ENCODE measurements at regions of chr18 and their contacts with region 1.

Region 1: DNA sequence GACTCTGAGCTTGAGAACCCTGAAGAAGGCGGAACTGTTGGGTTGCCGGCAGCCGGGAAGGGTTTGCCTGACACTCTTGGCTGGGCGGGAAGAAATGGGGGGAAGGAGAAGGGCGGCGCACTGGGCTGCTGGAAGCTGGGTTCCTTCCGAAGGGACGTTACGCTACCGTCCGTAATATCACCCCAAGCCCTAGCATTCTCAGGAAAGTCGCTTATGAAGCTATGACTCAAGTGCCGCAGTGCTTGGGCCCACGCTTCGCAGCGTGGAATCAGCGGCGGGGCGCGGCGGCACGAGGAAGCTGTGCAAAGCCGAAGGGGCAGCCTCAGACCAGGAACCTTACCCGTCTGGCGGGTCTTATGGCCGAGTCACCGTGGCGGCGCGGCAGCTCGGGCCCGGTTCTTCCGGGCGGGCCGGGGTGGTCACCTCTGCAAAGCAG is 50.2 kb upstream of the SIGLEC15 start:
- DNase-seq: no peak
- H3K4me3 ChIP-seq: peak overlapping the region; percentile 56
- CTCF ChIP-seq: no peak

Region 2: GRCh38 chr18:45764000-45764686 is 11.1 kb before region 1 on chr18:
- CTCF ChIA-PET with region 1: interaction called, 11 read pairs
- POLR2A ChIA-PET with region 1: interaction called, 5 read pairs
- DNase-seq: no peak
- H3K4me3 ChIP-seq: no peak overlapping the region
- CTCF ChIP-seq: no peak

Region 3: GRCh38 chr18:45786649-45787340 is 11.5 kb after region 1 on chr18:
- CTCF ChIA-PET with region 1: interaction called, 7 read pairs
- POLR2A ChIA-PET with region 1: interaction called, 10 read pairs
- DNase-seq: no peak
- H3K4me3 ChIP-seq: no peak overlapping the region
- CTCF ChIP-seq: no peak

Region 4: GRCh38 chr18:45802608-45803492 is 27.6 kb after region 1 on chr18:
- CTCF ChIA-PET with region 1: interaction called, 3 read pairs
- POLR2A ChIA-PET with region 1: interaction called, 22 read pairs
- DNase-seq: peak; percentile 95
- H3K4me3 ChIP-seq: no peak overlapping the region
- CTCF ChIP-seq: no peak